Esophagus muscularis mucosa (tissue), 4 donors: ENCODE measurements at regions of chr2 and their contacts with region 1.

Region 1: GRCh38 chr2:171922230-171923022 is at the start of gene HAT1:
- DNase-seq: peak; percentile 99
- H3K4me3 ChIP-seq: peak within 1 kb of the TSS; percentile 76 to 92 (median 84)
- H3K27ac ChIP-seq: peak within 1 kb of the TSS; percentile 94 to 99 (median 94)
- H3K4me1 ChIP-seq: peaks cover 17 to 36% (median 30%) of the 10 kb centered on the region in 4 donors
- H3K27me3 ChIP-seq: no peaks in the 10 kb centered on the region
- CTCF ChIP-seq: no peak
- EP300 ChIP-seq: peak; percentile 55
- POLR2A ChIP-seq: no peak
- total RNA-seq, gene HAT1: 21.8 to 39.4 (median 24.6) TPM

Region 2: DNA sequence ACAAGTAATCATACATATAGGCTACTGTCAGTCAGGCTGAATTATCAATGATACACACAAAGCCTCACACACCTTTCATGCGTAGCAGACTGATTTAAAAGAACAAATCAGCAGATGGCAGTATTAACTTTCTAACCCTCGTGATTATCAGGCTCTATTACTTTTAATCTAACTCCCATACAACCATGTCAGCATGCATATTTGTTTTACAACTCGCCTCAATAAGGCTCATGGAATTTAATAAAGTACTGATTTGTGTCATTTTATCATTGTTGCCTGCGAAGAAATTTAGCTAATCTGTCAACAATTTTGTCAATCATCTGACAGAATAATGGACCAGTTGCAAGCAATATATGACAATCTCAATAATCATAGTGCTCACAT is 111.2 kb before region 1 on chr2:
- intact Hi-C with region 1: loop called (anchors 10 kb)
- DNase-seq: no peak
- H3K4me3 ChIP-seq: no peak overlapping the region
- H3K27ac ChIP-seq: no peak overlapping the region
- H3K4me1 ChIP-seq: peaks cover 0 to 24% (median 17%) of the 10 kb centered on the region in 4 donors
- H3K27me3 ChIP-seq: no peaks in the 10 kb centered on the region
- CTCF ChIP-seq: peak in 2 of 3 experiments; percentile 39 to 44
- EP300 ChIP-seq: no peak
- POLR2A ChIP-seq: no peak

Region 3: GRCh38 chr2:171882089-171882769 is 40.2 kb before region 1 on chr2:
- intact Hi-C with region 1: loop called (anchors 5 kb)
- DNase-seq: no peak
- H3K4me3 ChIP-seq: no peak overlapping the region
- H3K27ac ChIP-seq: peak overlapping the region; percentile 73 to 81 (median 78)
- H3K4me1 ChIP-seq: peaks cover 20 to 54% (median 43%) of the 10 kb centered on the region in 4 donors
- H3K27me3 ChIP-seq: no peaks in the 10 kb centered on the region
- CTCF ChIP-seq: no peak
- EP300 ChIP-seq: peak; percentile 32
- POLR2A ChIP-seq: no peak

Region 4: DNA sequence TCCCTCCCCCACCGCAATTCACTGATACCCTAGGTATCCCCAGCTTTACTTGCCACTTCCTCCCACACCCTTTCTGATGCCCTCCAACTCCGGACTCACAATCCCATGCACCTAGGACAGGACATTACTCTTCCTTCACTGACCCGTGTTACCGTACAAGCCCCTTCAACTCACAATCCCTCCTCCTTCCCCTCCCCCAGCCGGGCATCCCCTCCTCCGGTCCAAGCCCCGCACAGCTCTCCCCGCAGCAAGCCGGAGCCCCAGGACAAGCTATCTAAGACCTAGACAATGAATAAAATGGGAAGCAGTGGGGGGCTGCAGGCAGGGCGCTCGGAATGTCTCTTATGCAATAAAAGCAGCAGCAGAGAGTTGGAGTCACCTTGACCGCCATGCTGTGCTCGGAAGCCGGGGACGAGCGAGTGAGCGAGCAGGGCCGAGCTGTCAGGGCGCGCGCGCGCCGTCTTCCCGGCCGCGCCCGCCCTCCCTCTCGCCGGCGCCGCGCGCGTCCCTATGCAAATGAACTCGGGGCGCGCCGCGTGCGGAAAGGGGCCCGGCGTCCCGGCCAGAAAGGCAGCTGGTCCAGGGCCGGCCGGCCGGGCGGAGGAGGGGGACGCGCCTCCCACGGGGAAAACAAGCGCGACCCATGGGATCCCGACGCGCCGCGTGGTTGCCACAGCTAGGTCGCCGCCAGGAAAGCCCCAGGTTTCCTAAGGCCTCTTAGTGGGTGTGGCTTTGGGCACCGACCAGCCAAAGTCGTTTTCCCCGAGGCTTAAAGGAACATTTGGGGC is 28.4 kb before region 1 on chr2 and contains the start of gene SLC25A12:
- intact Hi-C with region 1: loop called (anchors 1 kb)
- DNase-seq: peak; percentile 93
- H3K4me3 ChIP-seq: peak within 1 kb of the TSS; percentile 74 to 95 (median 89)
- H3K27ac ChIP-seq: peak within 1 kb of the TSS; percentile 85 to 88 (median 86)
- H3K4me1 ChIP-seq: peaks cover 5 to 68% (median 56%) of the 10 kb centered on the region in 4 donors
- H3K27me3 ChIP-seq: no peaks in the 10 kb centered on the region
- CTCF ChIP-seq: no peak
- EP300 ChIP-seq: no peak
- POLR2A ChIP-seq: peak; percentile 50
- total RNA-seq, gene SLC25A12: 52.2 to 68.9 (median 63.6) TPM

Region 5: GRCh38 chr2:171957061-171957460 is 34.6 kb after region 1 on chr2:
- intact Hi-C with region 1: no loop called
- DNase-seq: no peak
- H3K4me3 ChIP-seq: no peak overlapping the region
- H3K27ac ChIP-seq: no peak overlapping the region
- H3K4me1 ChIP-seq: peaks cover 14 to 30% (median 29%) of the 10 kb centered on the region in 4 donors
- H3K27me3 ChIP-seq: no peaks in the 10 kb centered on the region
- CTCF ChIP-seq: no peak
- EP300 ChIP-seq: no peak
- POLR2A ChIP-seq: no peak